ENCODE measurements at regions of chr12 and their contacts with region 1.

Region 1: DNA sequence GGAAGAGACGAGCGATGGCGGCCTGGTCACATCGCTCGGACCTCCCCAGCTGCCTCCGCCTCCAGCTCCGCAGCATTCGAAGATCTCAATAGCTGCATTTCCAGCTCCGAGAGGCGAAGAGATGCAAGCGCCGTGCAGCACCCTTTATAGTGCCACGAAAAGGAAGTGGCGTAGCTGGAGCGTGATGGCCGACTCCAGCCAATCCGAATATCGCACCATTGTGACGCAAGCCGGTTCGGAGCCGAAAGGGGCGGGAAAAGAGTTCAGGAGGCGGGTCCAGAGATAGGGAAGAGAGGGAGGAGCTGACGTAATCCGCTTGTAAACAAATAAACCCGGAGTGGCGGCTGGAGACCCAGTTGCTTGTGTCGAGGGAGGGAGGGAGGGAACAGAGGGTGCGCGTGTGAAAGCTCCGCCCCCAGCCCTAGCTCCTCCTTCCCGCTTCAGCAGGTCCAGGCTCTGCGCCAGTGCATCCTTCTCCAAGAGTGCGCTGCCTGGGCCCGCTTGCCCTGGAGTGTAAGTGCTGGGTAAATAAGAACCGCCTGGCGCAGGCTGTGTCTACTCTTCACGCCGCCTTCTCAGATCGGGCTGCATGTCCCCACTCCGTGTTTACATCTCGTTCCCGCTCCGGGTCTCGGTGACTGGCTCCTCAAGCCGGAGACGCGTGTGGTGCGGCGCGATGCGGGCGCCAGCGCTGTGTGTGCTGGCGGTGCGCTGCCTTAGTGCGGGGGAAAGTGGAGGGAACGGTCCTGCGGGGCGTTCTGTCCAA is at the start of gene BTG1:
- H3K4me3 Mint-ChIP-seq: peak within 1 kb of the TSS; percentile 96
- H3K27ac Mint-ChIP-seq: peak within 1 kb of the TSS; percentile 92
- H3K4me1 Mint-ChIP-seq: peaks cover 40% of the 10 kb centered on the region
- H3K27me3 Mint-ChIP-seq: no peaks in the 10 kb centered on the region

Region 2: DNA sequence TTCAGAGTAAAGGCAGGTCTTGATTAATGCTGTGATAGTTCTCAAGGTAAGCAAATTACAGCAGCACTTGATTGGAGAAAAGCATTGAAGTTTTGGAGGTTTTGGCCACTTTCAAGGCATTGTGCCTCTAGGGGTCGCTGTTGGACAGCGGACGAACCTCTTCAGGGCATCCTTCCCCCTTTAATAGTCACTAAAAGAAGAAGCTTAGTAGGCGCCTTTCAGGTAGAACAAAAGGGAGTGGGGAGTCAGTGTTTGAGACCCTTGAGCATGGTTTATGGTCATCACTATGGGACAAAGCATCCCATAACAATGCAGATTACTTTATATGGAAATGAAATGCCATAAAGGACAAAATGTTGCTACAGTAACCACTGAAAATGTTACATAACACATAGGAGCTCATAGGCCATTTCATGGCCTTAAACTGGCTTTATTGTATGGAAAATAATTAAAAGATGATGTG is 763.8 kb before region 1 on chr12:
- intact Hi-C with region 1: loop called (anchors 5 kb)
- H3K4me3 Mint-ChIP-seq: peak overlapping the region; percentile 62
- H3K27ac Mint-ChIP-seq: no peak overlapping the region
- H3K4me1 Mint-ChIP-seq: peaks cover 21% of the 10 kb centered on the region
- H3K27me3 Mint-ChIP-seq: peaks cover 8% of the 10 kb centered on the region

Region 3: GRCh38 chr12:91877022-91877421 is 268.9 kb before region 1 on chr12:
- intact Hi-C with region 1: loop called (anchors 10 kb)
- H3K4me3 Mint-ChIP-seq: no peak overlapping the region
- H3K27ac Mint-ChIP-seq: peak overlapping the region; percentile 71
- H3K4me1 Mint-ChIP-seq: peaks cover 43% of the 10 kb centered on the region
- H3K27me3 Mint-ChIP-seq: no peaks in the 10 kb centered on the region

Region 4: GRCh38 chr12:92297932-92298696 is 152.2 kb after region 1 on chr12:
- intact Hi-C with region 1: loop called (anchors 10 kb)
- H3K4me3 Mint-ChIP-seq: no peak overlapping the region
- H3K27ac Mint-ChIP-seq: no peak overlapping the region
- H3K4me1 Mint-ChIP-seq: peaks cover 10% of the 10 kb centered on the region
- H3K27me3 Mint-ChIP-seq: peaks cover 2% of the 10 kb centered on the region

Region 5: DNA sequence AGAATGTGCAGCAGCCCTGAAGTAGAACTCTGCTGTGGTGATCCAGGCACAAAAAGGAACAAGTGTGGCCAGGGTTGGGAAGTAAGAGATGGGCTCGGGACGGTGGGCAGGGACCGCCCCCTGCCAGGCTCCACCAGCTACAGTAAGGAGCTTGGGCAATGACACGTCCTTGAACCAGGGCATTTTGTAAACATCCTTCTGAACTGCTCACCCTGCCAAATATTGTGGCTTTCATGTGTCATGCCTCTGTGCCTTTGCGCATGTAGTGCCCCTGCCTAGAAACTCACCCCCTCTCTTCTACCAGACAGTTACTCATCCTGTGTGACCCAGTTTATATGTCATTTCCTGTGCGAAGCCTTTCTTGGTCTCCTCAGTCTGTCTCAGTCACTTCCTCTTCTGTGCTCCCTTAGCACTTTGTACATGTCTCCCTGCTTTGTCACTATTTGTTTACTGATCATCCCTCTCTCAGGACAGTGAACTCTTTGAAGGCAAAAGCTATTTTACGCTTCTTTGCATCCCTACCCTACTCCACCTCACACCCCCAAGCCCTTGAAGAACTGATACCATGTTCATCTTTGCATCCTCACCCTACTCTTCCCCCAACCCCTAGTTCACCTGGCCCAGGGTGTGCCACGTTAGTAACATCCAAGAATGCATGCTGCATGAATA is 448.0 kb after region 1 on chr12:
- intact Hi-C with region 1: loop called (anchors 5 kb)
- H3K4me3 Mint-ChIP-seq: peak overlapping the region; percentile 34
- H3K27ac Mint-ChIP-seq: peak overlapping the region; percentile 63
- H3K4me1 Mint-ChIP-seq: peaks cover 58% of the 10 kb centered on the region
- H3K27me3 Mint-ChIP-seq: no peaks in the 10 kb centered on the region